Panc1 (cell line): ENCODE measurements at regions of chr1 and their contacts with region 1.

Region 1: GRCh38 chr1:38026592-38027200 is 14.2 kb downstream of the UTP11 start:
- DNase-seq: no peak
- ATAC-seq: peak; percentile 56
- H3K4me3 ChIP-seq: no peak overlapping the region
- H3K27ac ChIP-seq: no peak overlapping the region
- H3K4me1 ChIP-seq: peaks cover 20% of the 10 kb centered on the region
- H3K27me3 ChIP-seq: no peaks in the 10 kb centered on the region
- CTCF ChIP-seq: peak; percentile 89

Region 2: DNA sequence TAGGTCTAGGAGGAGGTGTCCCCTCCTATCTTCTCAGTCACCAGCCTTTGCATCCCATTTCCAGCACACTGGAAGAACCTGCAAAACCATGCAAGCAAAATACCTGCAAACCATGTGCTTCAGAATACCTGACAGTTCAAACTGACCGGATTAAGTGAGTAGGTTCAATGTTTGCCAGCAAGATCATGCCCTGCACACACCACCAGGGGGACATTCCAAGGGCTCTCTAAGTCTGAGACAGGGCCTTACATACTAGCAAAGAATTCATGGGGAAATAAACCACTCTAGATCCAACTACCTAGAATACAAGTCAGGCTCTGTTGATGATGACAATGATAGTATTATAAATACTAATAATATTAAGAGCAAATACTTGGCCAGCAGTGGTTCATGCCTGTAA is 107.4 kb before region 1 on chr1:
- CTCF ChIA-PET with region 1: no interaction called
- POLR2A ChIA-PET with region 1: no interaction called
- in situ Hi-C with region 1: no loop called
- intact Hi-C with region 1: no loop called
- DNase-seq: no peak
- ATAC-seq: peak; percentile 96
- H3K4me3 ChIP-seq: no peak overlapping the region
- H3K27ac ChIP-seq: no peak overlapping the region
- H3K4me1 ChIP-seq: no peaks in the 10 kb centered on the region
- H3K27me3 ChIP-seq: no peaks in the 10 kb centered on the region
- CTCF ChIP-seq: no peak

Region 3: GRCh38 chr1:38044221-38045215 is 17.8 kb after region 1 on chr1:
- CTCF ChIA-PET with region 1: no interaction called
- POLR2A ChIA-PET with region 1: interaction called, 10 read pairs
- in situ Hi-C with region 1: no loop called
- intact Hi-C with region 1: no loop called
- DNase-seq: no peak
- ATAC-seq: no peak
- H3K4me3 ChIP-seq: peak overlapping the region; percentile 23 to 37
- H3K27ac ChIP-seq: no peak overlapping the region
- H3K4me1 ChIP-seq: peaks cover 4% of the 10 kb centered on the region; the same call in 1 of the 2 replicates
- H3K27me3 ChIP-seq: peaks cover 11% of the 10 kb centered on the region; the same call in 1 of the 2 replicates
- CTCF ChIP-seq: no peak

Region 4: DNA sequence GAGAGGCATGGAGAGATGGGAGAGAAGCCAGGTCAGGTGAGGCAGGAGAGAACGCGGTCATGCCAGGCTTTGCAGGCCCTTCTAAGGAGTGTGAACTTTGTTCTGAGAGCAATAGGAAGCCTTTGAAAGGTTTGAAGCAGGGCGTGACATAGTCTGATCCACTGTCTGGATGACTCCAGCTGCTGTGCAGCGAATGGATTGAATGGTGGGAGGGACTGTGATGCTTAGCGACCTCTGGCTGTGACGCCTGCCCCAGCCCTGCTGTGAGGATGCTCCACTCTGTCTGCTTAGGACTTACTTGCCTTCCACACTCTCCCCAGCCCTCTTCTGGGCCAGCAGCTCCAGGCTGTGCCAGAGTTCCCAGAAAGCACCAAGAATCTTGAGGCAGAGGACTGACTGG is 61.7 kb after region 1 on chr1:
- CTCF ChIA-PET with region 1: no interaction called
- POLR2A ChIA-PET with region 1: no interaction called
- in situ Hi-C with region 1: no loop called
- intact Hi-C with region 1: no loop called
- DNase-seq: no peak
- ATAC-seq: peak; percentile 74
- H3K4me3 ChIP-seq: no peak overlapping the region
- H3K27ac ChIP-seq: no peak overlapping the region
- H3K4me1 ChIP-seq: no peaks in the 10 kb centered on the region
- H3K27me3 ChIP-seq: no peaks in the 10 kb centered on the region
- CTCF ChIP-seq: no peak